K562 (cell line): ENCODE measurements at regions of chr16 and their contacts with region 1.

Region 1: DNA sequence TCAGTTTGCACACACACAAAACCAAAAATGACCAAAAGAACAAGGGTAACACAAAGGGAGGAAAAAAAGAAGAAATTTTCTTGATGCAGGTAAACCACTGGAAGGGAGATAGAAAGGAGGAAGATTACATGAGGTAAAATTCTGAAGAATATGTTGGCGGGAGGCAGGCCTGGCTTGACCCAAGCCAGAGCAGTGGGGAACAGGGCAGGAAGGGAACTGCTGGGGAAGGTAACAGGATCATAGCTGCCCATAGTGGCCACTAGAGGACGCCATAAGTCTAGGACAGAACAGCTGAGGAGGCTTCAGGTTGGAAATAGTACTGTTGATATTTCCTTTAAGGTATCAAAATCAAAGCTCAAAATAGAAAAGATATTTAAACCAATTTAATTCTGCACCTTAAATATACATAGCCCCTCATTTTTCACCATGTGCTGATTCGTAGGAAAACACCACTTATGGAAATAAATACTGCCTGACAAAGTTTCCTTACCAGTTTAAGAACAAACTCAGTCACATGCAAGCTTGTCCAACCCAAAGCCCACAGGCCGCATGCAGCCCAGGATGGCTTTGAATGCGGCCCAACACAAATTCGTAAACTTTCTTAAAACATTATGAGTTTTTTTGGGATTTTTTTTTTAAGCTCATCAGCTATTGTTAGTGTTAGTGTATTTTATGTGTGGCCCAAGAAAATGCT is 15.5 kb downstream of the VPS35 start:
- DNase-seq: peak; percentile 76 to 82 (median 78)
- ATAC-seq: peak; percentile 100
- H3K4me3 ChIP-seq: no peak overlapping the region
- H3K27ac ChIP-seq: no peak overlapping the region
- H3K4me1 ChIP-seq: no peaks in the 10 kb centered on the region
- H3K27me3 ChIP-seq: no peaks in the 10 kb centered on the region
- CTCF ChIP-seq: peak; percentile 93 to 98 (median 97)
- EP300 ChIP-seq: no peak
- POLR2A ChIP-seq: no peak
- RAD21 ChIP-seq: peak; percentile 73 to 88

Region 2: GRCh38 chr16:46774743-46775177 is 101.3 kb after region 1 on chr16:
- CTCF ChIA-PET with region 1: no interaction called
- POLR2A ChIA-PET with region 1: no interaction called
- in situ Hi-C with region 1: no loop called
- intact Hi-C with region 1: no loop called
- DNase-seq: no peak
- ATAC-seq: no peak
- H3K4me3 ChIP-seq: no peak overlapping the region
- H3K27ac ChIP-seq: no peak overlapping the region
- H3K4me1 ChIP-seq: peaks cover 0 to 6% of the 10 kb centered on the region in 2 experiments; a peak in 2 of 5 replicates
- H3K27me3 ChIP-seq: no peaks in the 10 kb centered on the region
- CTCF ChIP-seq: no peak
- EP300 ChIP-seq: no peak
- POLR2A ChIP-seq: no peak
- RAD21 ChIP-seq: no peak

Region 3: DNA sequence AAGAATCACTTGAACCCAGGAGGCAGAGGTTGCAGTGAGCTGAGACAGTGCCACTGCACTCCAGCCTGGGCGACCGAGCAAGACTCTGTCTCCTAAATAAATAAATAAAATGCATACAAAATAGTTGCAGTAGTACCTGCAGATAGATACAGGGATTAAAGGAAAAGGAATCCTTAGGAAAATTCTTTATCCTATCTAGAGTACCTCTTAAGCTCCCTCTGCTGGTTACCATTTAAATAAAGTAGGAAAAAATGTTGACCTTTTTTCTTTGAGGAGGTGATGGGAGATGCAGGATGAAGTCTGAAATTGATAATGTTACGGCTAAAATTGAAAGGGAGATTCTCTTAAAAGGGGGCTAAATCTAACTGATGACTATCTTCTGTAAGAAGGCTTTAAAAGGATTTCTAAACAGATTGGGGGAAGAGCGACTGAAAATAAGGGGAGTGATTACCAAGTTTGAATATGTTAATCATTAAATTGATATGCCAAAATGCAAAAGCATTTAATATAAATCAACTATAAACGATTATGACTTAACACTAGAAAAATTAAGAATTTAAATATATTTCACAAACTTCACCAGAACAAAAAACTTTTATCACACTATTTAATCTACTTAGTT is 128.1 kb after region 1 on chr16:
- CTCF ChIA-PET with region 1: interaction called, 6 read pairs
- POLR2A ChIA-PET with region 1: interaction called, 4 read pairs
- in situ Hi-C with region 1: no loop called
- intact Hi-C with region 1: loop called (anchors 1 kb)
- DNase-seq: no peak
- ATAC-seq: peak; percentile 54; the same call in 1 of the 3 replicates
- H3K4me3 ChIP-seq: no peak overlapping the region
- H3K27ac ChIP-seq: no peak overlapping the region
- H3K4me1 ChIP-seq: no peaks in the 10 kb centered on the region
- H3K27me3 ChIP-seq: no peaks in the 10 kb centered on the region
- CTCF ChIP-seq: peak in 2 of 3 experiments; percentile 28 to 43; a peak in 3 of 6 replicates
- EP300 ChIP-seq: no peak
- POLR2A ChIP-seq: no peak
- RAD21 ChIP-seq: peak in 1 of 2 experiments; percentile 62; a peak in 3 of 4 replicates

Region 4: GRCh38 chr16:46908540-46909372 is 235.3 kb after region 1 on chr16:
- CTCF ChIA-PET with region 1: interaction called, 21 read pairs
- POLR2A ChIA-PET with region 1: no interaction called
- in situ Hi-C with region 1: loop called (anchors 25 kb)
- intact Hi-C with region 1: loop called (anchors 1 kb)
- DNase-seq: peak; percentile 67 to 78 (median 73)
- ATAC-seq: peak; percentile 82
- H3K4me3 ChIP-seq: no peak overlapping the region
- H3K27ac ChIP-seq: no peak overlapping the region
- H3K4me1 ChIP-seq: no peaks in the 10 kb centered on the region
- H3K27me3 ChIP-seq: no peaks in the 10 kb centered on the region
- CTCF ChIP-seq: peak; percentile 54 to 73 (median 64); a peak in 5 of 6 replicates
- EP300 ChIP-seq: no peak
- POLR2A ChIP-seq: no peak
- RAD21 ChIP-seq: peak; percentile 53 to 71

Region 5: GRCh38 chr16:46929378-46930332 is 256.2 kb after region 1 on chr16:
- CTCF ChIA-PET with region 1: interaction called, 4 read pairs
- POLR2A ChIA-PET with region 1: interaction called, 3 read pairs
- in situ Hi-C with region 1: loop called (anchors 25 kb)
- intact Hi-C with region 1: loop called (anchors 5 kb)
- DNase-seq: peak; percentile 79 to 91 (median 88)
- ATAC-seq: peak; percentile 96
- H3K4me3 ChIP-seq: no peak overlapping the region
- H3K27ac ChIP-seq: no peak overlapping the region
- H3K4me1 ChIP-seq: peaks cover 0 to 12% of the 10 kb centered on the region in 2 experiments; a peak in 3 of 5 replicates
- H3K27me3 ChIP-seq: no peaks in the 10 kb centered on the region; a peak in 1 of 5 replicates
- CTCF ChIP-seq: peak; percentile 84 to 93 (median 88)
- EP300 ChIP-seq: no peak
- POLR2A ChIP-seq: no peak
- RAD21 ChIP-seq: peak; percentile 46 to 76